ENCODE measurements at regions of chr1 and their contacts with region 1.

Region 1: DNA sequence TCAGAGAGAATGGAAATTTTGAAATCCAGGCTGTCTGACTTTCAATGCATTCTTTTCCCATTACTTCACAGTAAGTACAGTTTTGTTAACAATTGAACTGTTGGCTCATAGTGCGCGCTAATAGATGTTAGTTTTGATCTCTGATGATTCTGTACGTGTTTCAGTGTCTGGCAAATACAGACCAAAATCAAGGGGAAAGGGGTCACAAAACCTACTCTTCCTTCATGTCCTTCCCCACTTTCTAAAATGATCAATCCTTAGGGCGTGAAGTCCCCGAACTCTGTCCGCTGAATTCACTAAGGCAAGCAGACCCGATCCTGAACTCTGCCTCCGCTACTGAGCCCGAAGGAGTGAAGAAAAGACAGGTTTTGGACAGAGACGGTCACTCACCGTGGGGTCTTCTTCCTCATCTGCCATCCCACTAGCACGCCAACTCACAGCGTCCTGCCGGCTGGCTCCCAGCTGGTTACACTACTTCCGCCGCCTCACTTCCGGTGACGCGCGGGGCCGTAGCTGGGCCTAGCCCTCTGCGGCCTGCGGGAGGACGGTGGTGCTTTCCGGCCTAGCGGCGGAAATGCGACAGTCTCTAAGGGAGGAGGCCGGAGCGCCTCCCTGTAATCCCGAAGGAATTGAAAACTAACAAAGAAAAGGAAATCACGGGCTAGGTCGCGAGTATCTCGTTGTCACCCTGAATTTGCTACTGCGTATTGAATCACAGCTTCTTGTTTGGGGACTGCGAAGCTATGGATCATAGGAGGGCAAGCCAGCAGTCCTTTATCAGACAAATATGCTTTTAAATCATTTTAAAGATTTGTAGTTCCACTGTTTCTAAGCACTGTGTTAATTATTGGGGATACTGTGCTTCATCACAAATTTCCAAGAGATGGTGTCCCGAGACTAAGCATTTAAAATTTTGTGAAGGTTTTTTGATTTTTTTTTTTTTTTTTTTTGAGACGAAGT is at the start of gene TAF13:
- DNase-seq: peak; percentile 90
- H3K4me3 Mint-ChIP-seq: peak within 1 kb of the TSS; percentile 95
- H3K27ac Mint-ChIP-seq: peak within 1 kb of the TSS; percentile 95
- H3K4me1 Mint-ChIP-seq: peaks cover 16% of the 10 kb centered on the region
- H3K27me3 Mint-ChIP-seq: no peaks in the 10 kb centered on the region
- total RNA-seq, gene TAF13: 20.1 to 23.7 TPM

Region 2: GRCh38 chr1:109050266-109050995 is 25.4 kb before region 1 on chr1:
- CTCF ChIA-PET with region 1: no interaction called
- intact Hi-C with region 1: no loop called
- DNase-seq: no peak
- H3K4me3 Mint-ChIP-seq: no peak overlapping the region
- H3K27ac Mint-ChIP-seq: no peak overlapping the region
- H3K4me1 Mint-ChIP-seq: no peaks in the 10 kb centered on the region
- H3K27me3 Mint-ChIP-seq: peaks cover 5% of the 10 kb centered on the region

Region 3: DNA sequence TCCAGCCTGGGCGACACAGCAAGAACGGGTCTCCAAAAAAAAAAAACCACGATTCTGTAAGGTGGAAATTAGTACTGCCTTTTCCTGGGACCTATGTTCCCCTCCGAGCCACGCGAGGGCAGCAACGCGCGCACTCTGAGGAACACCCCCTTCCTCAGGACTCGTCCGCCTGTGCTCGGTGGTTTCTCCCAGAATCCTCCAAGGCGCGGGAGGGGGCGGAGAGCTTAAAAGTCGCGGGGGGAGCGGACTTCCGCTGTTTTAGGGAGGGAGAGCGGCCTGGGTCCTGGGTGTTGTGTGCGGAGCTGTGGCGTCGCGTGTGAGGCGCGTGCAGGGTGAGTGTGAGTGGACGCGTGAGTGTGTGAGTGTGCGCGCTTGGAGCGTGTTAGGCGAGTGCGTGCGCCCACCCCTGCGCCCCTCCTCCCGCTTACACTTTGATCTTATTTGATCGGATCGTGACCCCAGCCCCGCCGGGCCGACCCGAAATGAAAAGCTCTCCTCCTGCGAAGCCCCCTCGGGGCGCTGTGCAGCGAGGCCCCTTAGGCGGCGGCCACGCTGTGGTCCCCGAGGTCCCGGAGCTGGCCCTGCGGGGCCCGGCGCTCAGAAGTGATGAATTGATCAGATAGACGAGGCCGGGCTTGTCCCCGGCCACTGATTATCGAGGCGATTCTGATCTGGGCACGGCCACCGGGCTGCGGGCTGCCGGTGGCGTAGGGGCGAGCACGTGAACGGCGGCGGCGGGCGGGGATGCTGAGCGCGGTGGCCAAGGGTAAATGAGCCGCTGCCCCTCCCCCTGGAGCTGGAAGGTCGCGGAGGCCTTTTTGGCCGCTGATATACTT is 24.3 kb after region 1 on chr1:
- CTCF ChIA-PET with region 1: interaction called, 11 read pairs
- intact Hi-C with region 1: loop called (anchors 1 kb)
- DNase-seq: peak; percentile 98
- H3K4me3 Mint-ChIP-seq: peak overlapping the region; percentile 99
- H3K27ac Mint-ChIP-seq: peak overlapping the region; percentile 97
- H3K4me1 Mint-ChIP-seq: peaks cover 23% of the 10 kb centered on the region
- H3K27me3 Mint-ChIP-seq: peaks cover 2% of the 10 kb centered on the region